ENCODE measurements at regions of chr14 and their contacts with region 1.

Region 1: GRCh38 chr14:104708606-104709268 is 15.3 kb upstream of the ADSS1 start:
- DNase-seq: peak; percentile 61 to 67
- H3K4me3 ChIP-seq: no peak overlapping the region
- H3K27ac ChIP-seq: no peak overlapping the region
- H3K4me1 ChIP-seq: no peaks in the 10 kb centered on the region
- H3K27me3 ChIP-seq: no peaks in the 10 kb centered on the region
- CTCF ChIP-seq: peak; percentile 80 to 98 (median 92)
- POLR2A ChIP-seq: no peak

Region 2: GRCh38 chr14:104650057-104650981 is 58.4 kb before region 1 on chr14:
- intact Hi-C with region 1: loop called (anchors 1 kb)
- DNase-seq: peak; percentile 52 to 55
- H3K4me3 ChIP-seq: no peak overlapping the region
- H3K27ac ChIP-seq: no peak overlapping the region
- H3K4me1 ChIP-seq: peaks cover 0 to 6% of the 10 kb centered on the region in 2 donors
- H3K27me3 ChIP-seq: no peaks in the 10 kb centered on the region
- CTCF ChIP-seq: peak; percentile 72 to 99 (median 90)
- POLR2A ChIP-seq: no peak

Region 3: GRCh38 chr14:104657101-104657524 is 51.6 kb before region 1 on chr14:
- intact Hi-C with region 1: loop called (anchors 2 kb)
- DNase-seq: no peak
- H3K4me3 ChIP-seq: no peak overlapping the region
- H3K27ac ChIP-seq: no peak overlapping the region
- H3K4me1 ChIP-seq: no peaks in the 10 kb centered on the region
- H3K27me3 ChIP-seq: no peaks in the 10 kb centered on the region
- CTCF ChIP-seq: no peak
- POLR2A ChIP-seq: no peak

Region 4: GRCh38 chr14:104759001-104759969 is 50.5 kb after region 1 on chr14:
- intact Hi-C with region 1: no loop called
- DNase-seq: no peak
- H3K4me3 ChIP-seq: no peak overlapping the region
- H3K27ac ChIP-seq: no peak overlapping the region
- H3K4me1 ChIP-seq: peaks cover 2 to 8% of the 10 kb centered on the region in 2 donors
- H3K27me3 ChIP-seq: no peaks in the 10 kb centered on the region
- CTCF ChIP-seq: no peak
- POLR2A ChIP-seq: no peak